CD8-positive, alpha-beta memory T cell (primary cell): ENCODE measurements at regions of chr12 and their contacts with region 1.

Region 1: GRCh38 chr12:46414591-46415268 is 42.2 kb upstream of the SLC38A2 start:
- DNase-seq: no peak
- H3K4me3 ChIP-seq: no peak overlapping the region
- H3K4me3 Mint-ChIP-seq: no peak overlapping the region
- H3K27ac ChIP-seq: no peak overlapping the region
- H3K27ac Mint-ChIP-seq: no peak overlapping the region
- H3K4me1 ChIP-seq: no peaks in the 10 kb centered on the region
- H3K4me1 Mint-ChIP-seq: no peaks in the 10 kb centered on the region
- H3K27me3 ChIP-seq: no peaks in the 10 kb centered on the region
- H3K27me3 Mint-ChIP-seq: peaks cover 0 to 5% of the 10 kb centered on the region in 2 donors

Region 2: GRCh38 chr12:46357438-46358324 is 57.0 kb before region 1 on chr12:
- CTCF ChIA-PET with region 1: no interaction called
- POLR2A ChIA-PET with region 1: no interaction called
- DNase-seq: no peak
- H3K4me3 ChIP-seq: no peak overlapping the region
- H3K4me3 Mint-ChIP-seq: no peak overlapping the region
- H3K27ac ChIP-seq: no peak overlapping the region
- H3K27ac Mint-ChIP-seq: peak overlapping the region in 4 of 8 donors; percentile 33 to 67 (median 56)
- H3K4me1 ChIP-seq: peaks cover under 1% of the 10 kb centered on the region
- H3K4me1 Mint-ChIP-seq: peaks cover 22 to 46% (median 33%) of the 10 kb centered on the region in 3 donors
- H3K27me3 ChIP-seq: no peaks in the 10 kb centered on the region
- H3K27me3 Mint-ChIP-seq: no peaks in the 10 kb centered on the region

Region 3: GRCh38 chr12:46386877-46387629 is 27.7 kb before region 1 on chr12:
- CTCF ChIA-PET with region 1: no interaction called
- POLR2A ChIA-PET with region 1: no interaction called
- DNase-seq: no peak
- H3K4me3 ChIP-seq: no peak overlapping the region
- H3K4me3 Mint-ChIP-seq: peak overlapping the region in 5 of 7 donors; percentile 20 to 59 (median 44)
- H3K27ac ChIP-seq: no peak overlapping the region
- H3K27ac Mint-ChIP-seq: peak overlapping the region in 5 of 8 donors; percentile 50 to 85 (median 60)
- H3K4me1 ChIP-seq: peaks cover 26% of the 10 kb centered on the region
- H3K4me1 Mint-ChIP-seq: peaks cover 39 to 65% (median 57%) of the 10 kb centered on the region in 3 donors
- H3K27me3 ChIP-seq: no peaks in the 10 kb centered on the region
- H3K27me3 Mint-ChIP-seq: no peaks in the 10 kb centered on the region

Region 4: DNA sequence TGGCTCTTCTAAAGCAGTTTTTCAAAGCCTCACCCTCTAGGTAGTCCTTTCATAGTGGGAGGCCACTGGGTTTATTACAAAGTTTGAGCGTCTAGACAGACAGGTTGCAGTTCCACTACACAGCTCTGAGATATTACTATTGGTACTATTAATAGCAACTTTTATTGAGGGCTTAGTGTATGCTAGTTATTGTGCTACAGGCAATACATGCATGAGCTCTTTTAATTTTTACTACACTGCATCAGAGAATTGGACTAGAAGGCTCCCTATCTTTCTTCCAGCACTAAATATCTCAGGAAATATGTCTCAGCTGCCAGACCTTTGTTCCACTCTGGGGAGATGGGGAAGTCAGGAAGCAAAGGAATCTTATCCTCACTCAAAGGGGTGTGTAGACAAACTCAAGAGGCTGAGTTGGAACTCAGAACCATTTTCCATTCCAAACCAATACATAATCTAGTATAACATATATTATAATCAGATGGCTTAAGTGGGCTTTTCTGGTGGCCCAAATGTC is 119.7 kb after region 1 on chr12:
- CTCF ChIA-PET with region 1: no interaction called
- POLR2A ChIA-PET with region 1: interaction called, 12 read pairs
- DNase-seq: no peak
- H3K4me3 ChIP-seq: no peak overlapping the region
- H3K4me3 Mint-ChIP-seq: no peak overlapping the region
- H3K27ac ChIP-seq: no peak overlapping the region
- H3K27ac Mint-ChIP-seq: no peak overlapping the region
- H3K4me1 ChIP-seq: no peaks in the 10 kb centered on the region
- H3K4me1 Mint-ChIP-seq: peaks cover 0 to 4% (median under 1%) of the 10 kb centered on the region in 3 donors
- H3K27me3 ChIP-seq: no peaks in the 10 kb centered on the region
- H3K27me3 Mint-ChIP-seq: peaks cover 0 to 4% of the 10 kb centered on the region in 2 donors